Right cardiac atrium (tissue), 5 donors: ENCODE measurements at regions of chr2 and their contacts with region 1.

Region 1: DNA sequence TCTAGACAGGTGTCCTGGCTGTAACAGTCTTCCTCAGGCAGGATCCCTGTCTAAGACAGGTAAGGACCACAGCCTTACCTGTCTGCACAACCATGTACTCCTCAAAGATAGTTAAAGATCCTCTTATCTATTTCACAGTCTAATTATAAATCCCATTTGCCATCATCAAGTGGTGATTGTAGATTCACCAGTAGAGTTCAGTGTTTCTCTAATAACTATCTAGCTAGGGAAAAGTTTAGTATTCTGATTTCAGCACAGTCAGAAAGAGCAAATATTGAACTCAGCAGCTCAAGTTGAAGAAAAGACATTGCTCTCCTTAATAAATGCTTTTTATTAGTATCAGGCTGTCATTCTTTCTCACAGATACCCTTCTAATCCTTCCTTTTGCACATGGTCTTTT is 1305.5 kb upstream of the NXPH2 start:
- DNase-seq: no peak
- ATAC-seq: no peak
- H3K4me3 ChIP-seq: no peak overlapping the region
- H3K27ac ChIP-seq: no peak overlapping the region
- H3K4me1 ChIP-seq: no peaks in the 10 kb centered on the region
- H3K27me3 ChIP-seq: no peaks in the 10 kb centered on the region

Region 2: GRCh38 chr2:140247451-140248195 is 161.9 kb after region 1 on chr2:
- intact Hi-C with region 1: no loop called
- DNase-seq: peak in 1 of 3 donors; percentile 54
- ATAC-seq: peak; percentile 69 to 92
- H3K4me3 ChIP-seq: no peak overlapping the region
- H3K27ac ChIP-seq: no peak overlapping the region
- H3K4me1 ChIP-seq: no peaks in the 10 kb centered on the region
- H3K27me3 ChIP-seq: no peaks in the 10 kb centered on the region

Region 3: GRCh38 chr2:140863713-140864112 is 778.0 kb after region 1 on chr2:
- intact Hi-C with region 1: loop called in 1 of 4 experiments (anchors 10 kb)
- DNase-seq: no peak
- ATAC-seq: no peak
- H3K4me3 ChIP-seq: no peak overlapping the region
- H3K27ac ChIP-seq: no peak overlapping the region
- H3K4me1 ChIP-seq: no peaks in the 10 kb centered on the region
- H3K27me3 ChIP-seq: no peaks in the 10 kb centered on the region